Activated CD8-positive, alpha-beta memory T cell treated with anti-CD3 and anti-CD28 coated beads, Interleukin-2, amount 10 ng/mL, durations not matched to agents 7 days and 5 days (primary cell): ENCODE measurements at regions of chr12 and their contacts with region 1.

Region 1: DNA sequence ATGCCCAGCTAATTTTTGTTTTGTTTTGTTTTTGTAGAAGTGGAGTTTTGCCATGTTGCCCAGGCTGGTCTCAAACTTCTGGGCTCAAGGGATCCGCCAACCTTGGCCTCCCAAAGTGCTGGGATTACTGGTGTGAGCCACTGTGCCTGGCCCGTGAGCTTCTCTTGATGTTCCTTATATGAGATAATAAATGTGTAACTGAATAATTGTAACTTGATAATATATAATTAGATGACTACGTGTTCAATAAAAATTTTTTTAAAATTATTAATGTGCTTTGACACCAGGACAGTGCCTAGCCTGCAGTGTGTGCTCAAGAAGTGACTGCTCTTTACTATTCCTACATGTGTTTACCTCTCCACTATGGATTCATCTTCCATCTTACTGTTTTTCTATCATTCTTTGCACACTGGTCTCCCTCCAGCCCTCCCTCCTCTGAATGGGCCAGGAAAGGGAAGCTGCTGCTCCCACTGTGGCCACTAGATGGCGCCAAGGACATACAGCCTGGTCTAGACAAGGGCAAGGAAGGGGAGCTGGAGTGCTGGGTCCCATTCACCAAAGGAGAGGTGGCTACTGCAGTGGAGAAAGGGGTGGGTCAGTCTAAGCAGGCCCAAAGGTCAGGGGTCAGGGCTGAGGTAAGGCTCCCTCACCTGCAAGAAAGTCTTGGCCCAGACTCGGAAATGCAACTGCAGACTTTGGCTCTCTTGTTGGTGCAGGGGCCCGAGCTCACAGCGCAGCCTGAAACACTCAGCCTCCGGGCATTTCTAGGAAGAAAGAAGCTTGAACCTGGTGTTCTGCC is 14.7 kb upstream of the ZNF385A start:
- DNase-seq: peak; percentile 90
- ATAC-seq: peak; percentile 88
- H3K4me3 Mint-ChIP-seq: no peak overlapping the region
- H3K27ac Mint-ChIP-seq: no peak overlapping the region
- H3K4me1 Mint-ChIP-seq: peaks cover 26% of the 10 kb centered on the region
- H3K27me3 Mint-ChIP-seq: no peaks in the 10 kb centered on the region

Region 2: GRCh38 chr12:54251667-54252284 is 147.4 kb before region 1 on chr12:
- CTCF ChIA-PET with region 1: interaction called, 10 read pairs
- DNase-seq: no peak
- ATAC-seq: peak; percentile 45
- H3K4me3 Mint-ChIP-seq: no peak overlapping the region
- H3K27ac Mint-ChIP-seq: peak overlapping the region; percentile 19
- H3K4me1 Mint-ChIP-seq: peaks cover 4% of the 10 kb centered on the region
- H3K27me3 Mint-ChIP-seq: no peaks in the 10 kb centered on the region

Region 3: DNA sequence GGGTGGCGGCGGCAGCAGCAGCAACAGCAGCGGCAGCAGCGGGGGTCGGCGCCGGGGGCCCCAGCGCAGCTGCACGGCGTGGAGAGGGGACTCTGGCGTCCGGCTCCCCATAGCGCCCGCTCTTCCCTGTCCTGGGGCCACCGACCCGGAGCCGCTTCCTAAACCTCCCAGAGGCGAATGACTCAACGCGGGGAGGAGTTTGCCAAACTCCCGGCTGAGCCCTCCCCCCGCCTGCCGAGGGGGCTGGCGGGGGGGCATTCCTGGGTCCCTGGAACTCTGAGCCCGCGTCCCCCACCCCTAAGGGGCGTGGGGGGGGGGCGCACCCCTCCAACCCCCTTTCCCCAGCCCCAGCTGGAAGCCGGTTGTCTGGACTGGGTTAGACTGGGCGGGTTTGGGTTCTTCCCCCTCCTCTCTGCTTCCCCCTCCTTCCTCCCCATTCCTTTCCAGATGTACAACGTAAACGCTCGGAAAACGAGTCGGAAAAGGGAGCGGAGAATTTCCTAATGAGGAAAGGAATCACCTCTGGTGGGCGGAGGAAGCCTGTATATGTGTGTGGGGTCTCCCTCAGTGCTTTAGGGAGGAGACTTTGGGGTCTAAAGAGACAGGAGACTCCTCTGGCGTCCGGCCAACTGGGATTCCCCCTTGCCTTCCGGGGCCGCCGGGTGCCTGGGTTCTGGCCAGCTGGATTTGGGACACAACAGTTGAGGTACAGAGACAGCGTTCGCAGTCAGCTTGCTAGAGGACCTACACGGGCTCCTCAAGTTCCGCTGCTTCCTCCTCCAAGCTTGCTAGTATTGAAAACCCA is 20.1 kb after region 1 on chr12 and contains the start of gene ITGA5:
- CTCF ChIA-PET with region 1: interaction called, 705 read pairs
- DNase-seq: peak; percentile 56
- ATAC-seq: peak; percentile 66
- H3K4me3 Mint-ChIP-seq: peak within 1 kb of the TSS; percentile 88
- H3K27ac Mint-ChIP-seq: peak within 1 kb of the TSS; percentile 82
- H3K4me1 Mint-ChIP-seq: peaks cover 44% of the 10 kb centered on the region
- H3K27me3 Mint-ChIP-seq: peaks cover 36% of the 10 kb centered on the region
- total RNA-seq, gene ITGA5: 13.2 to 37.6 TPM

Region 4: DNA sequence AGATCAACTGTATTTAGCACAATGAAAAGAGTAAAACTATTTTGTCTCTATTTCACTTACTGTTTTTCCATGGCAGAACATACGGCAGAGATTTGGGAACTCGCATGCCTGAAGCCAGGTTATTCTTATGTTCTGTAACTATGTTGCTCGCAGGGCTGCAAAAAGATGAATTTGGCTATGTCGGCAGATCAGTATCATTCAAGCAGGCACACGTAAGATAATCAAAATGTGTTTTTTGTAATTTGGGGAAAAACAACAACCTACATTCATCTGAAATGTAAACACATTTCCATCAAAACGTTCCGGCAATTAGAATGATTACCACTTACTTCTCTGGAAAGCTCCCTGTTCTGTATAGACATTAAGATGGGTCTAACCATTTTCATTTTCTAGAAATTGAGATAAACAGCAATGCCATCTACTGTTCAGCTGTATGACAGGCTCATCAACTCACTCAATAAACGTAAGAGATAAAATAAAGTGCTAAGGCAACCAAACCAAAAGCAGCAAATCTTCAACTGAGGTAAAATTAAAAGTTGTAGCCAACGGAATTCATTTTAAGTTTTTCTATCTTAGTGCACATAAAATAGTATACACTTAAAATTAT is 61.2 kb after region 1 on chr12:
- CTCF ChIA-PET with region 1: interaction called, 705 read pairs
- DNase-seq: no peak
- ATAC-seq: no peak
- H3K4me3 Mint-ChIP-seq: no peak overlapping the region
- H3K27ac Mint-ChIP-seq: no peak overlapping the region
- H3K4me1 Mint-ChIP-seq: no peaks in the 10 kb centered on the region
- H3K27me3 Mint-ChIP-seq: peaks cover 35% of the 10 kb centered on the region

Region 5: GRCh38 chr12:54497883-54498282 is 98.7 kb after region 1 on chr12:
- CTCF ChIA-PET with region 1: interaction called, 22 read pairs
- DNase-seq: no peak
- ATAC-seq: peak; percentile 18
- H3K4me3 Mint-ChIP-seq: peak overlapping the region; percentile 100
- H3K27ac Mint-ChIP-seq: peak overlapping the region; percentile 97
- H3K4me1 Mint-ChIP-seq: peaks cover 40% of the 10 kb centered on the region
- H3K27me3 Mint-ChIP-seq: no peaks in the 10 kb centered on the region